ENCODE measurements at regions of chr11 and their contacts with region 1.

Region 1: GRCh38 chr11:75896843-75897419 is 81.9 kb downstream of the UVRAG start:
- DNase-seq: peak; percentile 68
- H3K4me3 ChIP-seq: no peak overlapping the region
- H3K27ac ChIP-seq: no peak overlapping the region
- H3K4me1 ChIP-seq: no peaks in the 10 kb centered on the region
- H3K27me3 ChIP-seq: no peaks in the 10 kb centered on the region

Region 2: DNA sequence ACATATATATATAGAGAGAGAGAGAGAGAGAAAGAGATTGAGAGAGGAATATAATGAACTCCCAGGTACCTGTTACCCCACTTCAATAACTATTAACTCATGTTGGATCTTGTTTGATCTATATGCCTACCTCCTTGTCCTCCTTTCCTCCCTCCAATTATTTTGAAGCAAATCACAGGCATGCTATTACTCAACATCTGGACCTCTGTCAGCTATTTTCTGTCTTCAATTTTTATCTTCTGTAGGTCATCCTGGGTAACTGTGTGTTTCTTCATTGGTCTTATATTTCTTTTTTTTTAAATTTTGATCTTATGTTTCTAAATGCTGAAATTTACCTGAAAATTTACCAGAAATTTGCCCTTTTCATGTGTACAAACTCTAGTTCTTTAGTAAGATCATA is 57.1 kb before region 1 on chr11:
- in situ Hi-C with region 1: no loop called
- DNase-seq: peak; percentile 44
- H3K4me3 ChIP-seq: no peak overlapping the region
- H3K27ac ChIP-seq: no peak overlapping the region
- H3K4me1 ChIP-seq: peaks cover 16% of the 10 kb centered on the region
- H3K27me3 ChIP-seq: no peaks in the 10 kb centered on the region

Region 3: DNA sequence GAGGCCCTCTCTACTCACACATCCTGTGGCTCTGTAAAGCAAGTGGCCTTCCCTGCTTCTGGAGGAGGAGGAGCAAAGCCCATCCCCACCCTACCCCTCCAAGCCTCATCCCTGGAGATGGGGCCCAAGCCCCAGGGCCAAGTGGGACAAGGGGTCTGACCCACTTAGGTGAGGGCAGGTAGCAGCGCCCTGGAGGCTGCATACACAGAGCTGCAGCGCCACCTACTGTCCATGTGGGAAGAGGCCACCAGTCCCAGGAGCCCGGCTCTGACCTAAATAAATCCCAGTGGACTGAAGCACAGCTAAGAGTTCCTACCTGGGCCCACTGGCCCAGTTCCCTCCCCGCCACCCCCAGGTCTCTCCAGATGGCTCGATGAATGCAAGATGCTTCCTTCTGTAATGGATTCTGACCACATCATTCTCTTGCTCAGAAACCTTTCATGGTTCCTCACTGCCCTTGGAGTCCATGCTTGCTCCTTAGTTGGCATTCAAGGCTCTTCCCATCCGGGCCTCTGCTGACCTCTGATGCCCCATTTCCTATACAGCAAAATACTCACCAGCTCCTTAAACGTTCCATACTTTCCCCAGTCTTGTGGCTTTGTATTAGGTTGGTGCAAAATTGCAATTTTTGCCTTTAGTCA is 421.9 kb after region 1 on chr11:
- in situ Hi-C with region 1: loop called (anchors 5 kb)
- DNase-seq: peak; percentile 82
- H3K4me3 ChIP-seq: no peak overlapping the region
- H3K27ac ChIP-seq: no peak overlapping the region
- H3K4me1 ChIP-seq: 0 out of 2 replicates have a peak, but pooled peaks cover 8% of the 10 kb centered on the region
- H3K27me3 ChIP-seq: peaks cover 9% of the 10 kb centered on the region; the same call in 1 of the 2 replicates

Region 4: GRCh38 chr11:76512851-76513653 is 616.1 kb after region 1 on chr11:
- in situ Hi-C with region 1: loop called (anchors 25 kb)
- DNase-seq: peak; percentile 62
- H3K4me3 ChIP-seq: no peak overlapping the region
- H3K27ac ChIP-seq: no peak overlapping the region
- H3K4me1 ChIP-seq: peaks cover 5% of the 10 kb centered on the region; the same call in 1 of the 2 replicates
- H3K27me3 ChIP-seq: no peaks in the 10 kb centered on the region